ENCODE measurements at regions of chr17 and their contacts with region 1.

Region 1: GRCh38 chr17:48618256-48618897 is 3.3 kb upstream of the HOXB8 start:
- DNase-seq: peak; percentile 81 to 86
- ATAC-seq: peak; percentile 81 to 95 (median 90)
- H3K4me3 ChIP-seq: no peak overlapping the region
- H3K27ac ChIP-seq: no peak overlapping the region
- H3K4me1 ChIP-seq: peaks cover 0 to 36% (median 14%) of the 10 kb centered on the region in 9 donors
- H3K27me3 ChIP-seq: peaks cover 77 to 100% (median 100%) of the 10 kb centered on the region in 7 donors
- CTCF ChIP-seq: peak; percentile 92 to 97 (median 97)

Region 2: GRCh38 chr17:48024937-48025906 is 593.2 kb before region 1 on chr17:
- intact Hi-C with region 1: loop called in 6 of 10 experiments (anchors 5 to 10 kb)
- DNase-seq: peak; percentile 96 to 98
- ATAC-seq: peak; percentile 87 to 95 (median 92)
- H3K4me3 ChIP-seq: peak overlapping the region; percentile 27 to 60 (median 54)
- H3K27ac ChIP-seq: peak overlapping the region; percentile 32 to 89 (median 82)
- H3K4me1 ChIP-seq: peaks cover 18 to 51% (median 41%) of the 10 kb centered on the region in 9 donors
- H3K27me3 ChIP-seq: peaks cover 0 to 28% (median 16%) of the 10 kb centered on the region in 7 donors
- CTCF ChIP-seq: peak; percentile 53 to 88 (median 80)

Region 3: GRCh38 chr17:48153691-48154358 is 464.6 kb before region 1 on chr17:
- intact Hi-C with region 1: loop called in 3 of 10 experiments (anchors 10 kb)
- DNase-seq: no peak
- ATAC-seq: no peak
- H3K4me3 ChIP-seq: no peak overlapping the region
- H3K27ac ChIP-seq: no peak overlapping the region
- H3K4me1 ChIP-seq: no peaks in the 10 kb centered on the region
- H3K27me3 ChIP-seq: peaks cover 5 to 75% (median 67%) of the 10 kb centered on the region in 7 donors
- CTCF ChIP-seq: peak in 7 of 9 donors; percentile 28 to 63 (median 50)

Region 4: DNA sequence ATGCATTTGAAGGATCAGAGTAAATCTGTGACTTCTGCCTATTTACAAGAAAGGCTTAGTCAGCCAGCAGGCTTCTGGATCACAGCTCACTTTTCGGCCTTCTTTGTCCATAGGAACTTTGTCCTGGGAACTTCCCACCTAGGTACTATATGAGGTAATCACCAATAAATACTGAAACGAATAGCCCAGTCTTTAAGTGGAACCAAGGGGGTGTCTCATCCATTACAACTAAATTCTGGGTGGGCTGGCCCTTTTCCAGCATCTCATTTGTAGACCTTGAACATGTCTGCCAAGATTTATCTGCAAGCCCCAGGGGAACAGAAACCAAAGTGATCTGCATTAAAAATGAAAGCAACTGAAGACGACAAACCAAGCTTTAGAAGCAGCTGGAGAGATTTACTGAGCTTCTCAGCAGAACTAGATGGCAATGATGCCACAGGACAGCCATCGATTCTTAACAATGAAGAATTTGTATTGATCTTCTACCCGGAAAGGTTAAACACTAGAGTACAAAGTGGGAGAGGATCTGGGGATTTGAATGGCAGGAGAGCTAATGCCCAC is 455.4 kb before region 1 on chr17:
- intact Hi-C with region 1: loop called in 4 of 10 experiments (anchors 10 kb)
- DNase-seq: no peak
- ATAC-seq: no peak
- H3K4me3 ChIP-seq: no peak overlapping the region
- H3K27ac ChIP-seq: no peak overlapping the region
- H3K4me1 ChIP-seq: peaks cover 0 to 5% (median 0%) of the 10 kb centered on the region in 9 donors
- H3K27me3 ChIP-seq: peaks cover under 1 to 37% (median 15%) of the 10 kb centered on the region in 7 donors
- CTCF ChIP-seq: no peak

Region 5: GRCh38 chr17:48335858-48336500 is 282.4 kb before region 1 on chr17:
- intact Hi-C with region 1: loop called in 6 of 10 experiments (anchors 5 to 10 kb)
- DNase-seq: no peak
- ATAC-seq: no peak
- H3K4me3 ChIP-seq: no peak overlapping the region
- H3K27ac ChIP-seq: no peak overlapping the region
- H3K4me1 ChIP-seq: no peaks in the 10 kb centered on the region
- H3K27me3 ChIP-seq: peaks cover 0 to 100% (median 84%) of the 10 kb centered on the region in 7 donors
- CTCF ChIP-seq: peak; percentile 46 to 83 (median 75)

Region 6: GRCh38 chr17:48344246-48344645 is 274.1 kb before region 1 on chr17:
- intact Hi-C with region 1: loop called in 6 of 10 experiments (anchors 5 to 10 kb)
- DNase-seq: no peak
- ATAC-seq: no peak
- H3K4me3 ChIP-seq: no peak overlapping the region
- H3K27ac ChIP-seq: no peak overlapping the region
- H3K4me1 ChIP-seq: no peaks in the 10 kb centered on the region
- H3K27me3 ChIP-seq: peaks cover 0 to 95% (median 48%) of the 10 kb centered on the region in 7 donors
- CTCF ChIP-seq: no peak

Region 7: DNA sequence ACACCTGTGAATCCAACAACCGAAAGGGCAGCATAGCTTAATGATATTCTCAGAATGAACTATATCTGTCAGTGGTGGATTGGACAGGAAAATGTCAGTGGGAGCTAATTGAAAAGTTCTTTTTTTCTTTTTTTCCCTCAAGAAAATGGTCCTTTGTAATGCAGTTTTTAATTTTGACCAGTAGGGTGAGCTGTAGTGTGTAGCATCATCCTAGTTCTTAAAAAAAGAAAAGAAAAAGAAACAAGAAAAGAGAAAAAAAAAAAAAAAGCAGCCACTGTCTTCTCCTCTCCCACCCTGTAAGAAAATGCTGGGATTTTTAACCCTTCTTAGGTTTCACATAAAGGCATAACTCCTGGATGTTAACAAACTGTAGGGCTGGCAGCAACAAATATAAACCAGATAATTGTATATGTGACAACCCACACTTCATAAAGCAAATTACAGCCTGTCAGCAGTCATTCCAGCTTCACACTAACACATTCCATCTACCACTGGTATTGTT is 266.5 kb before region 1 on chr17:
- intact Hi-C with region 1: loop called in 1 of 10 experiments (anchors 5 kb)
- DNase-seq: no peak
- ATAC-seq: no peak
- H3K4me3 ChIP-seq: no peak overlapping the region
- H3K27ac ChIP-seq: no peak overlapping the region
- H3K4me1 ChIP-seq: no peaks in the 10 kb centered on the region
- H3K27me3 ChIP-seq: peaks cover 0 to 93% (median 74%) of the 10 kb centered on the region in 7 donors
- CTCF ChIP-seq: peak; percentile 33 to 76 (median 63)

Region 8: GRCh38 chr17:48678141-48678971 is 60.0 kb after region 1 on chr17:
- intact Hi-C with region 1: no loop called
- DNase-seq: peak; percentile 31 to 69
- ATAC-seq: peak; percentile 65 to 84 (median 74)
- H3K4me3 ChIP-seq: peak overlapping the region in 1 of 10 donors; percentile 5
- H3K27ac ChIP-seq: no peak overlapping the region
- H3K4me1 ChIP-seq: peaks cover 0 to 6% (median 4%) of the 10 kb centered on the region in 9 donors
- H3K27me3 ChIP-seq: peaks cover 4 to 97% (median 81%) of the 10 kb centered on the region in 7 donors
- CTCF ChIP-seq: peak; percentile 79 to 98 (median 91)

Measured in heart right ventricle (tissue), 16 donors.